PC-9 (cell line): ENCODE measurements at regions of chr14 and their contacts with region 1.

Region 1: GRCh38 chr14:55333711-55334485 is 62.7 kb downstream of the FBXO34 start:
- DNase-seq: no peak
- H3K4me3 ChIP-seq: no peak overlapping the region
- H3K27ac ChIP-seq: no peak overlapping the region
- H3K4me1 ChIP-seq: peaks cover 36% of the 10 kb centered on the region
- H3K27me3 ChIP-seq: no peaks in the 10 kb centered on the region
- CTCF ChIP-seq: no peak

Region 2: DNA sequence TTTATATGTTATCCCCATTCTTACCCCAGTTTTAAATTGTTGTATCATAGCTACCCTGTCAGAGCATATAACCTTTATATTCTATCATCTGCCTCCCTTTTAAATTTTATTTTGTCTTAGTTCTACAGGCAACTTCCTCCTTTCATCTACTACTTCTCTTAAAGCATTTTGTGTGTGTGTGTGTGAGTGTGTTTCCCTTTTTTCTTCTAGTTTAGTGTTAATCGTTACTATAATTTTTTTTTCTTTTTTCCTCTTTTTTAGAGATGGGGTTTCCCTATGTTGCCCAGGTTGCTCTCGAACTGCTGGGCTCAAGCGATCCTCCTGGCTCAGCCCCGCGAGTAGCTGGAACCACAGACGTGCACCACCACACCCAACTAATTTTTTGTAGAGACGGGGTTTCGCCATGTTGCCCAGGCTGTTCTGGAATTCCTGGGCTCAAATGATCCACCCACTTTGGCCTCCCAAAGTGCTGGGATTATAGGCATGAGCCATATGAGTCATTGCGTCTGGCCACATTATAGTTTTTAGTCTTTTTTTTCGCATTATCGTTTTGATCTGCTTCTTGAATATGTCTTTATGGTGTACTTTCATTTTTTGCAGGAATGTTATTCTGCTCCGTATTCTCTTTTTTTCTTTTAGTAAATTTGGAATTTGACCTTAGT is 95.7 kb before region 1 on chr14:
- CTCF ChIA-PET with region 1: no interaction called
- POLR2A ChIA-PET with region 1: no interaction called
- intact Hi-C with region 1: no loop called
- DNase-seq: peak in 1 of 2 experiments; percentile 73
- H3K4me3 ChIP-seq: peak overlapping the region; percentile 14; the same call in 1 of the 2 replicates
- H3K27ac ChIP-seq: peak overlapping the region; percentile 11; the same call in 1 of the 2 replicates
- H3K4me1 ChIP-seq: peaks cover 9% of the 10 kb centered on the region
- H3K27me3 ChIP-seq: no peaks in the 10 kb centered on the region
- CTCF ChIP-seq: no peak

Region 3: DNA sequence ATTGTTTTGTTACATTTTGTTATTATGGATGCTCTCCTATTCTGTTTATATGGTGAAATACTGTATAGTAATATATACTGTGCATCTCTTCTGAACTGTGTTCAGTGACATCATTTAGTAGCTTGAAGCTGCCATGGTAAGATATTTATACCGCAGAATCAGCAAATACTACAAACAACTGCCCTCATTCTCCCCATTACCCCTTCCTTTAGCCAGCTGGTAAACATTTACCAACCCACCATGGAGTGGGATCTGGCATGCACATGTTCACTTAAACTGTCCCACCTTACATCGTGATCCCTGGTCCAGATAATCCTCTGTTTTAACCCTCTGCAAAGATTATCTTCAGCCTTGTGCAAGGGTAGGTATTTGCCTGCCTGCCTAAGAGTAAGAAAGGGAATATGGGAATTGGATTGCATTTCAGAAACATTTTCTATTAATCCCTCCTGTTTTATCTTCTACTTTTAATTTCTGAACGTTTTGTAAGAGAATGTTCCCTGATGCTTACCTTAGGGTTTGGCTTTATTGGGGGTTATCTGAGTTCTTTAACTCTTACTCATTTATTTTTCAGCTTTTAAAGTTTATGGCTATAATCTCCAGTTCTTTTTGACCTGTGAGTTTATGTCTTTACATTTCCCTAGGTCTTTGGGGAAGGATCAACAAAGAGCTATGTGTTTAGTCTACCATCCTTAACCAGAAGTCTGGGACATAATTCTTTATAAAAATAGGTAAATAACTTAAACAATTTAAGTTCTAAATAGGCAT is 16.2 kb before region 1 on chr14:
- CTCF ChIA-PET with region 1: no interaction called
- POLR2A ChIA-PET with region 1: interaction called, 16 read pairs
- intact Hi-C with region 1: no loop called
- DNase-seq: no peak
- H3K4me3 ChIP-seq: no peak overlapping the region
- H3K27ac ChIP-seq: no peak overlapping the region
- H3K4me1 ChIP-seq: no peaks in the 10 kb centered on the region
- H3K27me3 ChIP-seq: no peaks in the 10 kb centered on the region
- CTCF ChIP-seq: no peak